ENCODE measurements at regions of chr19 and their contacts with region 1.

Region 1: GRCh38 chr19:42268704-42269477 is at the start of gene CIC:
- DNase-seq: peak; percentile 99
- ATAC-seq: peak; percentile 85
- H3K4me3 ChIP-seq: peak within 1 kb of the TSS; percentile 80
- H3K27ac ChIP-seq: peak within 1 kb of the TSS; percentile 93
- H3K4me1 ChIP-seq: peaks cover 22% of the 10 kb centered on the region
- H3K27me3 ChIP-seq: no peaks in the 10 kb centered on the region
- CTCF ChIP-seq: no peak
- total RNA-seq, gene CIC: 9.8 and 21.4 TPM in 2 replicates

Region 2: GRCh38 chr19:42255766-42256745 is 12.8 kb before region 1 on chr19:
- CTCF ChIA-PET with region 1: no interaction called
- POLR2A ChIA-PET with region 1: no interaction called
- intact Hi-C with region 1: loop called (anchors 1 kb)
- DNase-seq: peak; percentile 32
- ATAC-seq: peak; percentile 20
- H3K4me3 ChIP-seq: peak overlapping the region; percentile 76
- H3K27ac ChIP-seq: no peak overlapping the region
- H3K4me1 ChIP-seq: peaks cover 10% of the 10 kb centered on the region
- H3K27me3 ChIP-seq: no peaks in the 10 kb centered on the region
- CTCF ChIP-seq: no peak

Region 3: DNA sequence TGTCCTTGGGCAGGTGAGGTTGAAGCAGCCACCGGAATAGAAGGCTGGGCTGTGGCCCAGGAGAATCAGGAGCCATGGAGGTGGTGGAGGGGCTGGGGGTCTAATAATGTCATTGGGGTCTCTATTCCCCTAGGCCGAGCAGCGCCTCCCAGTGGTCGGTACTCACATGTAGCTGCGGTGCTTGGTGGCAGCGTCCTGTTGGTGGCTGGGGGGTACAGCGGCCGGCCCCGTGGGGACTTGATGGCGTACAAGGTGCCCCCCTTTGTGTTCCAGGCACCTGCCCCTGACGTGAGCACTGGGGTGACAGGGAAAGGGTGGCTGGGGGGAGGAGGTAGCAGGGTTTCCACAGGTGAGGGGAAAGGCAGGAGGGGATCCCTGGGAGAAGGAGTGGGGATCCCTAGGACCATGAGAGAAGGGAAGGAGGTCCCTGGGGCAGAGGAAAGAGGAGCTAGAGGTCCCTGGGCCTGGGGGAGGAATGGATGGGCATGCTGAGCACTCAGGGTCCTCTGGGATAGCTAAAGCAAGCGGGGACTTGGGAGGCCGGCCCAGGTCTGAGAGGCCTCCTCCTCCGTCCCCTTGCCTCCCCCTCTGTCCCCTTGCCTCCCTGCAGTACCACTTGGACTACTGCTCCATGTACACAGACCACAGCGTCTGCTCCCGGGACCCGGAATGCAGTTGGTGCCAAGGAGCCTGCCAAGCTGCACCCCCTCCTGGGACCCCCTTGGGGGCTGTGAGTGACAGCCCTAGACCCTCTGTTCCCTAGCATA is 74.6 kb after region 1 on chr19:
- CTCF ChIA-PET with region 1: interaction called, 17 read pairs
- POLR2A ChIA-PET with region 1: no interaction called
- intact Hi-C with region 1: no loop called
- DNase-seq: no peak
- ATAC-seq: no peak
- H3K4me3 ChIP-seq: no peak overlapping the region
- H3K27ac ChIP-seq: no peak overlapping the region
- H3K4me1 ChIP-seq: no peaks in the 10 kb centered on the region
- H3K27me3 ChIP-seq: no peaks in the 10 kb centered on the region
- CTCF ChIP-seq: peak; percentile 33; the same call in 1 of the 2 replicates

Region 4: GRCh38 chr19:42356686-42357085 is 87.8 kb after region 1 on chr19:
- CTCF ChIA-PET with region 1: no interaction called
- POLR2A ChIA-PET with region 1: no interaction called
- intact Hi-C with region 1: no loop called
- DNase-seq: no peak
- ATAC-seq: no peak
- H3K4me3 ChIP-seq: no peak overlapping the region
- H3K27ac ChIP-seq: no peak overlapping the region
- H3K4me1 ChIP-seq: no peaks in the 10 kb centered on the region
- H3K27me3 ChIP-seq: no peaks in the 10 kb centered on the region
- CTCF ChIP-seq: no peak

Measured in PC-3 (cell line).